Endothelial cell of umbilical vein (primary cell): ENCODE measurements at regions of chr5 and their contacts with region 1.

Region 1: GRCh38 chr5:112848116-112848811 is 12.8 kb upstream of the SRP19 start:
- DNase-seq: peak; percentile 68
- H3K4me3 ChIP-seq: no peak overlapping the region
- H3K27ac ChIP-seq: no peak overlapping the region
- H3K4me1 ChIP-seq: no peaks in the 10 kb centered on the region
- H3K27me3 ChIP-seq: no peaks in the 10 kb centered on the region
- CTCF ChIP-seq: peak; percentile 52 to 69
- POLR2A ChIP-seq: no peak

Region 2: DNA sequence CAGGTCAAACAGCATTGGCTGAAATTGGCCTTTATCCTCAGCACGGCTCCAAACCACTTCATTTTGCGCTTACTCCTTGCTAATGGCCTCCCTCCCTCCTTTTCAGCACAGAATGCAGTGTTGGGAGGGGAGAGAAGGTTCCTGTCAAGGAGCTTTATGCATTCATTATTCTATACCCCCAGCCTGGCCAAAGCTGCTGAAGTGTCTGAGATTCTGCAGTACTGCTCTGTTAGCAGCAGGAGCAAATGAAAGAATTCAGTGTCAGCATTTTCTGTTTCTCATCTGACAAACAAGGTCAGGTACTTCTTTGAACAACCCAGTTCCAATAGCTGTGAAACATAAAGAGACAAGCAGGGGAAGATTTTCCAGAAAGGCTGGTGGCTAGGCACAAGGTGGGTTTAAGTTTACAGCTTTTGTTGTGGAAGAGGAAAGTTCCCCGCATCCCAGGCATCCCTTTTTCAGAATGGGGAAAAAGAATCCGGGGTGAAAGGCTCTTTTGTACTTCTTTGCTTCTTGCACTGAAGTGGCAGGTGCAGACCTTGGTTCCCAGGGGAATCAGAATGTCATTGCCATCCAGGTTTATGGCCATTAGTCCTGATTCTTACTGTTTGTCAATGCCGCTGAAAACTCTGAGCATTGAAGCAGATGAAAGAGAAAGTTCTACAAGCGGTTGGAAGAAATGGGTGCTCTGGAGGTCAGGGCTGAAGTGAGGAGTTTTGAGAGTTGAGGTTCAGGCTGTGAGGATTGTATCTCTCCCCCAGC is 219.9 kb before region 1 on chr5:
- CTCF ChIA-PET with region 1: no interaction called
- POLR2A ChIA-PET with region 1: no interaction called
- dilution Hi-C with region 1: no loop called
- intact Hi-C with region 1: no loop called
- DNase-seq: no peak
- H3K4me3 ChIP-seq: no peak overlapping the region
- H3K27ac ChIP-seq: no peak overlapping the region
- H3K4me1 ChIP-seq: no peaks in the 10 kb centered on the region
- H3K27me3 ChIP-seq: peaks cover 5 to 13% of the 10 kb centered on the region in 2 experiments
- CTCF ChIP-seq: no peak
- POLR2A ChIP-seq: no peak

Region 3: DNA sequence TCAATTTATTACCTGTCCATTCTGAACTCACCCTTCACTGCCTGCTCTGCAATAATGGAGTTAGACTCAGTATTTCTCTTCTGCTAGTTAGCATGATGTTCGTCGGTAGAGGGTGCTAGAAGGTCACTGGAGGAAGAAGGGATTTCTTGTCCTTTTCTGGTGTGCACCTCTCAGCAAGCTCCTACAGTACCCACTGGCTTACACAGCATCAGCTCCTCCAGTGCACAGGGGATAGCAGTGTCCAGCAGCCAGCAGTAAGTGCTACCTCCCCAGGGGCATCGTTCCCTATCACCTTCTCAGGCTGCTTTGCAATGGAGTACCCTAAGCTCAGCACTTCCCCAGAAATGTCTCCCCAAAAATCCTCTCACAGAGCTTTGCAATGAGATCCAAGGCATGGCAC is 156.5 kb before region 1 on chr5:
- CTCF ChIA-PET with region 1: interaction called, 46 read pairs
- POLR2A ChIA-PET with region 1: no interaction called
- dilution Hi-C with region 1: no loop called
- intact Hi-C with region 1: loop called (anchors 1 kb)
- DNase-seq: peak; percentile 43
- H3K4me3 ChIP-seq: no peak overlapping the region
- H3K27ac ChIP-seq: no peak overlapping the region
- H3K4me1 ChIP-seq: no peaks in the 10 kb centered on the region
- H3K27me3 ChIP-seq: peaks cover 10 to 12% of the 10 kb centered on the region in 2 experiments
- CTCF ChIP-seq: peak; percentile 33 to 41
- POLR2A ChIP-seq: no peak

Region 4: GRCh38 chr5:112772124-112772523 is 76.1 kb before region 1 on chr5:
- CTCF ChIA-PET with region 1: interaction called, 12 read pairs
- POLR2A ChIA-PET with region 1: no interaction called
- dilution Hi-C with region 1: no loop called
- intact Hi-C with region 1: no loop called
- DNase-seq: no peak
- H3K4me3 ChIP-seq: no peak overlapping the region
- H3K27ac ChIP-seq: no peak overlapping the region
- H3K4me1 ChIP-seq: no peaks in the 10 kb centered on the region
- H3K27me3 ChIP-seq: no peaks in the 10 kb centered on the region
- CTCF ChIP-seq: no peak
- POLR2A ChIP-seq: no peak

Region 5: DNA sequence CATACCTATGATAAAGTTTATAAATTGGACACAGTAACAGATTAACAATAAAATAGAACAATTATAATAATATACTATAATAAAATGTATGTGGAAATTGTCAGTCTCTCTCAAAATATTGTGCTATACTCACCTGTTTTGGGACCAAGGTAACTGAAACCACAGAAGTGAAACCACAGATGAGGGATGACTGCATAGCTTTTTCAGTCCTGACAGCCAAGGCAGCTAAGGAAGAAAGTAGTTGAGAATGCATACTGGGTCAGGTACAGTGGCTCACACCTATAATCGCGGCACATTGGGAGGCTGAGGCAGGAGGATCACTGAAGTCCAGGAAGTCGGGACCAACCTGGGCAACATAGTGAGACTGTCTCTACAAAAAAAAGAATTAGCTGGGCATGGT is 21.7 kb after region 1 on chr5:
- CTCF ChIA-PET with region 1: interaction called, 11 read pairs
- POLR2A ChIA-PET with region 1: no interaction called
- dilution Hi-C with region 1: no loop called
- intact Hi-C with region 1: no loop called
- DNase-seq: no peak
- H3K4me3 ChIP-seq: no peak overlapping the region
- H3K27ac ChIP-seq: no peak overlapping the region
- H3K4me1 ChIP-seq: no peaks in the 10 kb centered on the region
- H3K27me3 ChIP-seq: no peaks in the 10 kb centered on the region
- CTCF ChIP-seq: no peak
- POLR2A ChIP-seq: no peak